Uterus (tissue), 4 donors: ENCODE measurements at regions of chr5 and their contacts with region 1.

Region 1: DNA sequence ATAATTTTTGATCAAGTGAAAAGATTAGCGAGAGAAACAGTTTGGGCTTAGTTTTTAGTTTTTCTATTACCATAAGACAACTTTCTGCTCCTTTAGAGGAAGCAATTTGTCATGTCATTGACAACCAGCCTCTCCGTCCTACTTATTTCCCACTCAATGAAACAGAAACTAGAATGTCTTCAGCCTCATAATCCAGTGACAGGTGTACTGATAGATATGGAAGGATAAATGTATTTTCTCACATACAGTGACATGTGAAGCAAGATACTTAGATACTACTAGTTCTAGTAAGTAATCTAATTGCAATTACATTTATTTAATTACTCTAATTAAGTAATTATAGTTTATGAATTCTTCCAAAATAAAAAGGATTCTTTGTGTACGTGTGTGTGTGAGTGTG is 429.7 kb downstream of the CDH10 start:
- DNase-seq: no peak
- H3K4me3 ChIP-seq: no peak overlapping the region
- H3K27ac ChIP-seq: no peak overlapping the region
- H3K4me1 ChIP-seq: no peaks in the 10 kb centered on the region
- H3K27me3 ChIP-seq: no peaks in the 10 kb centered on the region
- CTCF ChIP-seq: no peak
- POLR2A ChIP-seq: no peak

Region 2: DNA sequence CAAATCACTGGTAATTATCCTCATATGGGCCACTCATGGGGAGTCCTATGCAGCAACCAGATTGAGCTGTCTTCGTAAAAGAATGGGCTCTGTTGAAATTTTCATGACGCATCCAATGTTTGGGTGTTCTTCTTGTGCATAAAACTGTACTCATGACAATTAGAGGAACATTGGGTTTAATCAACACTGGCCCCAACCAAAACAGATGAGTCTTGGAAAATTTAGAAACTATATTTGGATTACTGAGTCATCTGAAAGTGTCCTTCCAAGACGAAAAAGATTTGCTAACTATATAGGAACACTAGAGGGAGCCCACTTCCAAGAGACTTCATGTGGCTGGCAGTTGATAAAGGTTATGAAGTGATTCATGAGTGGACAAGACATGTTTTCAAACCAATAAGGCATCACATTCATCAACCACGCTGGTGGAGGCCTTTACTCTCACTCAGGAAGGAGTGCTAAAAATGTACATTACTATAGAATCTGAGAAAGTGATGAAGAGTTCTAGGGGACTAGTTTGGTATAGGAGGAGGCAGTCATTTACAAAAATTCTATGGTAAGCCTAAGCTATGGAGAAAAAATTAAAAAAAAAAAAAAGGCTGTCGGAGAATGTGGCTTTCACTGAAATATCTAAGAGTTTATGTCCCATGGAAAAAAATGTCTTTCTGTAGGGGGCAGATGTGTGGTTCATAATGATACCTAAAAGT is 394.2 kb before region 1 on chr5:
- intact Hi-C with region 1: loop called (anchors 10 kb)
- DNase-seq: no peak
- H3K4me3 ChIP-seq: no peak overlapping the region
- H3K27ac ChIP-seq: no peak overlapping the region
- H3K4me1 ChIP-seq: no peaks in the 10 kb centered on the region
- H3K27me3 ChIP-seq: no peaks in the 10 kb centered on the region
- CTCF ChIP-seq: no peak
- POLR2A ChIP-seq: no peak